ENCODE measurements at regions of chr20 and their contacts with region 1.

Region 1: DNA sequence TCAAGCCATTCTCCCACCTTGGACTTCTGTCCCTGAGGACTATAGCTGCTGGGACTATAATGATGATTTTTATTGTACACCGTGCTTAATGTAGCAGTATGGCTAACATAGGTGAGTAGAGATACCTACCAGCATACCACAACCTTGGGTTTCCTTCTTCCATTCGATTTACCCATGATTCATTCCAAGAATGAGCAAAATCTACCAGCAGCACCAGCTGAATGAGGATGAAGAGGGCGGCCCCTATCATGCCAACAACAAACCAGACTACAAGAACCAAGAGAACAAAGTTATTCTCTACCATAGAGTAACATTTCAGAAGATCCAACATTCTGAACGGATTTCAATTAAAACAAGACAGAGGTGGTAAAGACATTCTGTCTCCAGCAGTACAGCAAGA is 12.1 kb downstream of the SERINC3 start:
- DNase-seq: no peak
- H3K4me3 ChIP-seq: no peak overlapping the region
- H3K27ac ChIP-seq: no peak overlapping the region
- H3K4me1 ChIP-seq: no peaks in the 10 kb centered on the region; a peak in 1 of 4 replicates
- H3K27me3 ChIP-seq: no peaks in the 10 kb centered on the region
- CTCF ChIP-seq: no peak
- EP300 ChIP-seq: no peak
- RAD21 ChIP-seq: no peak

Region 2: DNA sequence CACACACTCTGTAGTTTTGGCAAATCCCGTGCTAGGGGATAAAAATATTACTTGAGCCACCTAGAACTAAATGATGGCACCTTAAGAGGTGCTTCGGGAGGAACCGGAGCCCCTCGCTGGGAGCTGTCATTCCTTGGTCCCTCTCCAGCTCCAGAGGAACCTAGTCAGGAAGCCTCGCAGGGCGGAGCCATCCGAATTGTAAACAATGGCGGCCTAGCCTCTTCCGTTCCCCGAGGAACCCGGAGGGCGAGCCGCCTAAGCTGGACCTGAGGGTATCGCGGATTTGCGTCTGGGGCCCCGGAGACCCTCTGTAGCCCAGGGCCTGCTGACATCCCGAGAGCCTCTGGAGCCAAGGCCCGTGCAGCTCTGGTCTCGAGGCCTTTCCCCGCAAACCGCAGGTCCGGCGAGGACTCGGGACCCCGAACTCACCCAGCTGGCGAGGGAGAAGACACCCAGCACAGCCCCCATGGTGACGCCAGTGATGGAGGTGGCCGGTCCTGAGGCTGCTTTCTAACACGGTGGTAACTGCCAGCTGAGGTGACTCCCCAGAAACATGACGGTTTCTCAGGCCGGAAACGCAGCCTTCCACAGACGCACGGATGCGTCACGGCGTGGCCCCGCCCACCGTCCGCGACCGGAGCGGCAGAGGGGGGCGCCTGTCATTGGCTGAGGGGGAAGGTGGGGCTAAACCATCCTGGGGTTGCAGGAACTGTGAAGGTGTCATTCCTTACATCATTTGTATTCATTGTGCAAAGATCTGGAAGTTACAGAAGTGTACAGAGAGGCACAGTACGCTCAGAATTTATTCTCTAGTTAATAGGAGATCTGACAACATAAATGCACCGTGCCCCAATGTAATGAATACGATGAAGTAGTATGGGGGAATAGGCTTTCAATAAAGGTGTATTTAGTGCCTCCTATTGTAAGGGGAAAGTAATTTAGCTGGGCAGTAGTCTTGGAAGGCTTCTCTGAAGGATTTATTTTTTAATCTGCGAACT is 12.0 kb after region 1 on chr20 and contains the start of gene SERINC3:
- CTCF ChIA-PET with region 1: interaction called, 12 read pairs
- POLR2A ChIA-PET with region 1: interaction called, 4 read pairs
- DNase-seq: peak; percentile 96
- H3K4me3 ChIP-seq: peak within 1 kb of the TSS; percentile 90 to 94
- H3K27ac ChIP-seq: peak within 1 kb of the TSS; percentile 85 to 96
- H3K4me1 ChIP-seq: peaks cover 4 to 11% of the 10 kb centered on the region in 2 experiments; a peak in 3 of 4 replicates
- H3K27me3 ChIP-seq: no peaks in the 10 kb centered on the region
- CTCF ChIP-seq: peak; percentile 48
- EP300 ChIP-seq: no peak
- RAD21 ChIP-seq: peak; percentile 3; the same call in 1 of the 2 replicates
- polyA plus RNA-seq, gene SERINC3: 105 and 173 TPM in 2 replicates

Region 3: GRCh38 chr20:44532259-44532980 is 22.7 kb after region 1 on chr20:
- CTCF ChIA-PET with region 1: no interaction called
- POLR2A ChIA-PET with region 1: no interaction called
- DNase-seq: no peak
- H3K4me3 ChIP-seq: peak overlapping the region; percentile 67 to 80
- H3K27ac ChIP-seq: peak overlapping the region; percentile 7 to 71
- H3K4me1 ChIP-seq: peaks cover 6 to 11% of the 10 kb centered on the region in 2 experiments
- H3K27me3 ChIP-seq: no peaks in the 10 kb centered on the region
- CTCF ChIP-seq: no peak
- EP300 ChIP-seq: no peak
- RAD21 ChIP-seq: no peak